HCT116 (cell line): ENCODE measurements at regions of chr7 and their contacts with region 1.

Region 1: DNA sequence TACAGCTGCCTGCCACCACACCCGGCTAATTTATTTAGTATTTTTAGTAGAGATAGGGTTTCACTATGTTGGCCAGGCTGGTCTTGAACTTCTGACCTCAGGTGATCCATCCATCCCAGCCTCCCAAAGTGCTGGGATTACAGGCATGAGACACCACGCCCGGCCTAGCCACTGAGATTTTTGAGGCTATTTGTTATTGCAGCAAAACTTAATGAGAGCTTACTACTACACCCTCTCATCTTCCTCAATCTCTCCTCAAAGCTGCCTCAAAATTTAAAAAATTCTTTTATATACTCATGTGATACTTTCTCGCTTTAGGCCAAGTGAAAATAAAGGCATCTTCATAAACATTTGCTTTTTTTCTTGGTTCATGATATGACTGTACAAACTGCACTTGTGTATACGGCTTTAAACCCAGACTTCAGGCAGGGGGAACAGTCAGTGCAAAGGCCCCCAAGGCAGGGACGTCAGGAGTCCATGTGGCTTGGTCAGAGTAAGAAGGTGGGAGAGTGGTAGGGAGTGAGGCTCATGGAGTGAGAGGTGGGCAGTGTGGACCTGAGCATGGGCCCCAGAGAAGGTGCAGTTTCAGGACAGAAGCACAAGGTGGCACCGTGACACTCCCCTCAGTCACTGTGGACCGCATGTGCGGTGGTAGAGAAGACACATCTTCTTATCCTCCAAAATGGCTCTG is 55.5 kb downstream of the SYPL1 start:
- DNase-seq: peak; percentile 57
- ATAC-seq: peak; percentile 99
- H3K4me3 ChIP-seq: no peak overlapping the region
- H3K27ac ChIP-seq: no peak overlapping the region
- H3K4me1 ChIP-seq: peaks cover 0 to 5% of the 10 kb centered on the region in 2 experiments; a peak in 1 of 4 replicates
- H3K27me3 ChIP-seq: no peaks in the 10 kb centered on the region
- CTCF ChIP-seq: peak; percentile 78 to 91 (median 83)
- POLR2A ChIP-seq: no peak
- RAD21 ChIP-seq: peak; percentile 96

Region 2: GRCh38 chr7:106111655-106112116 is 55.0 kb after region 1 on chr7:
- CTCF ChIA-PET with region 1: no interaction called
- POLR2A ChIA-PET with region 1: no interaction called
- RAD21 ChIA-PET with region 1: no interaction called
- intact Hi-C with region 1: loop called (anchors 2 kb)
- DNase-seq: peak; percentile 26
- ATAC-seq: peak; percentile 74
- H3K4me3 ChIP-seq: peak overlapping the region; percentile 65 to 76
- H3K27ac ChIP-seq: peak overlapping the region; percentile 97
- H3K4me1 ChIP-seq: peaks cover 4 to 23% of the 10 kb centered on the region in 2 experiments; a peak in 3 of 4 replicates
- H3K27me3 ChIP-seq: no peaks in the 10 kb centered on the region
- CTCF ChIP-seq: no peak
- POLR2A ChIP-seq: no peak
- RAD21 ChIP-seq: no peak

Region 3: GRCh38 chr7:106153891-106154449 is 97.3 kb after region 1 on chr7:
- CTCF ChIA-PET with region 1: interaction called, 20 read pairs
- POLR2A ChIA-PET with region 1: no interaction called
- RAD21 ChIA-PET with region 1: interaction called, 6 to 8 read pairs
- intact Hi-C with region 1: loop called (anchors 1 kb)
- DNase-seq: peak; percentile 57
- ATAC-seq: peak; percentile 100
- H3K4me3 ChIP-seq: no peak overlapping the region
- H3K27ac ChIP-seq: no peak overlapping the region
- H3K4me1 ChIP-seq: peaks cover 0 to 8% of the 10 kb centered on the region in 2 experiments; a peak in 1 of 4 replicates
- H3K27me3 ChIP-seq: 0 out of 2 replicates have a peak, but pooled peaks cover 3% of the 10 kb centered on the region
- CTCF ChIP-seq: peak; percentile 90 to 95 (median 92)
- POLR2A ChIP-seq: no peak
- RAD21 ChIP-seq: peak; percentile 99

Region 4: GRCh38 chr7:106166655-106167342 is 110.1 kb after region 1 on chr7:
- CTCF ChIA-PET with region 1: no interaction called
- POLR2A ChIA-PET with region 1: no interaction called
- RAD21 ChIA-PET with region 1: no interaction called
- intact Hi-C with region 1: loop called (anchors 1 kb)
- DNase-seq: peak; percentile 68
- ATAC-seq: peak; percentile 84
- H3K4me3 ChIP-seq: no peak overlapping the region
- H3K27ac ChIP-seq: no peak overlapping the region
- H3K4me1 ChIP-seq: no peaks in the 10 kb centered on the region
- H3K27me3 ChIP-seq: no peaks in the 10 kb centered on the region
- CTCF ChIP-seq: peak; percentile 67 to 79 (median 68)
- POLR2A ChIP-seq: no peak
- RAD21 ChIP-seq: peak; percentile 83